OCI-LY7 (cell line): ENCODE measurements at regions of chr10 and their contacts with region 1.

Region 1: GRCh38 chr10:122307669-122308486 is 36.8 kb downstream of the BTBD16 start:
- DNase-seq: peak; percentile 82
- H3K4me3 ChIP-seq: peak overlapping the region; percentile 45
- H3K27ac ChIP-seq: peak overlapping the region; percentile 79
- H3K4me1 ChIP-seq: peaks cover 32% of the 10 kb centered on the region
- CTCF ChIP-seq: no peak

Region 2: DNA sequence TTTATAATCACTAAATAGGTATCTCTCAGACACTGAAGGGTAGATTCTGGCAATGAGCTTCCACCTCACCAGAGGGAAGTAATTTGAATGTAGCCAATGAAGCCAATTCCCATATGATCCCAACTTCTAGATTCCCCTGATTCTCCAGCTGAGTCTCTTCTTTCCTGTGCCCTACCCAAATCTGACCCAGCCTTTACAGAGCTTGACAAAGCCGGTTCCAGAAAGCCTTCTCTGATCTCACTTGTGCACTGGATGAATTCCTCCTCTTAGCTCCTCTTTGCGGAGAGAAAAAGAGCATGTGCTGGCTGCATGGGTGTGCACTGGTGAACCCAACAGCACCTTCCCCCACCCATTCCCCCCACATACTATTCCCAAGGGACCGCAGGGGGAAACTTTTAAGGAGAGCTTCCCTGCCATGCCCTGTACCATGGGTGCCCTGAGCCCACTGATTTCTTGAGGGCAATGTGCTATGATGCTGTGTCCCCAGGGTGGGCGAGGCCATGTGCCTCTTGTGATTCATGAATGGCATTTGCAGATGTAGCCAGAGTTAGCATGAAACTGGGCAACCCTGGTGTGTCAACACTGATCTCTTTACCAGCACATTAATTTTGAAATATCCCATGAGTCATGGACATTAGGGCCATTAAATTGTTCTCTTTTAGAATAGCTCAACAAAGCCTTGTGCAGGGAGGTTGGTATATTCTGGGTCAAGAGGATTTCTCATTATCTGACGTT is 16.2 kb after region 1 on chr10:
- CTCF ChIA-PET with region 1: no interaction called
- POLR2A ChIA-PET with region 1: interaction called, 13 read pairs
- intact Hi-C with region 1: no loop called
- DNase-seq: no peak
- H3K4me3 ChIP-seq: no peak overlapping the region
- H3K27ac ChIP-seq: no peak overlapping the region
- H3K4me1 ChIP-seq: peaks cover 17% of the 10 kb centered on the region
- CTCF ChIP-seq: no peak

Region 3: DNA sequence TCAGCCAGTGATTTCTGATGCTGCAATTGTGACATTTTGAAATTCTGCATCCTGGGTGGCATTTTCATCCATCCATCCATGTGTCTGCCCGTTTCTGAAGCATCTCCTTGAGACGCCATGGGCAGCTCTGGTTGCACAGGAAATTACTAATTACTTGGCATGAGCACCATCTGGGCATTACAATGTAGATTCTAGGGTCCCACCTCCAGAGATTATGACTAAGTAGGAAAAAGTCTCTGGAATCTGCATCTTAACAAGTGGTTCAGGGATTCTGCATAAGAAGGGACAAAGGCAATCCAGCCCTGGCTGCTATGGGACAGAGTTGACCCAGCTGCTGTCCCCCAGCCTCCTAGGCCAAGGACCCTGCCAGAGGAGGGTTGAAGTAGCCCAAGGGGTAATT is 472.5 kb after region 1 on chr10:
- CTCF ChIA-PET with region 1: no interaction called
- POLR2A ChIA-PET with region 1: no interaction called
- intact Hi-C with region 1: no loop called
- DNase-seq: no peak
- H3K4me3 ChIP-seq: no peak overlapping the region
- H3K27ac ChIP-seq: no peak overlapping the region
- H3K4me1 ChIP-seq: no peaks in the 10 kb centered on the region
- CTCF ChIP-seq: no peak